ENCODE measurements at regions of chr1 and their contacts with region 1.

Region 1: GRCh38 chr1:112466078-112466660 is 42.6 kb upstream of the WNT2B start:
- H3K4me3 Mint-ChIP-seq: peak overlapping the region; percentile 45
- H3K27ac Mint-ChIP-seq: peak overlapping the region; percentile 89
- H3K4me1 Mint-ChIP-seq: peaks cover 60% of the 10 kb centered on the region
- H3K27me3 Mint-ChIP-seq: no peaks in the 10 kb centered on the region

Region 2: GRCh38 chr1:112390775-112391602 is 75.2 kb before region 1 on chr1:
- intact Hi-C with region 1: loop called (anchors 1 kb)
- H3K4me3 Mint-ChIP-seq: peak overlapping the region; percentile 84
- H3K27ac Mint-ChIP-seq: peak overlapping the region; percentile 82
- H3K4me1 Mint-ChIP-seq: peaks cover 65% of the 10 kb centered on the region
- H3K27me3 Mint-ChIP-seq: peaks cover 20% of the 10 kb centered on the region

Region 3: GRCh38 chr1:112395821-112396652 is 70.1 kb before region 1 on chr1 and contains the start of gene CTTNBP2NL:
- intact Hi-C with region 1: loop called (anchors 1 kb)
- H3K4me3 Mint-ChIP-seq: peak within 1 kb of the TSS; percentile 98
- H3K27ac Mint-ChIP-seq: peak within 1 kb of the TSS; percentile 98
- H3K4me1 Mint-ChIP-seq: peaks cover 76% of the 10 kb centered on the region
- H3K27me3 Mint-ChIP-seq: no peaks in the 10 kb centered on the region

Region 4: DNA sequence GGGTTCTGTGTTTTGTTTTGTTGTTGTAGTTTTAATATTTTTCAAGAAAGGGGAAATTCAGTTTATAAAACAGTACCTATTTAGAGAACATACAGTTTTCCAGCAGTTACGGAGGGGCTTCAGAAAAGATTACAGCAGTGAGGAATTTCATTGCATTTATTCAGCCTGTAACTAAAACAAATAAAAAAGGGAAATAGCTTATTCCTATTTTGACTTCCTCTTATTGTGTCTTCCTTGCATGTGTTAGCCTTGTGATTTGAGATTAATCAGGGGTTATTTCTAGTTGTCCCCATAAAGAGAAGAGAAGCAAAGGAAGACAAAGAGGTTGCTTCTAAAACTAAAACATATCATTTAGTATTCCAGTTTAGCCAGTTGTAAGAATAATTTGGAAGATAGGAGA is 35.1 kb before region 1 on chr1:
- intact Hi-C with region 1: loop called (anchors 5 kb)
- H3K4me3 Mint-ChIP-seq: peak overlapping the region; percentile 49
- H3K27ac Mint-ChIP-seq: peak overlapping the region; percentile 95
- H3K4me1 Mint-ChIP-seq: peaks cover 36% of the 10 kb centered on the region
- H3K27me3 Mint-ChIP-seq: no peaks in the 10 kb centered on the region

Region 5: GRCh38 chr1:112619520-112620376 is 153.6 kb after region 1 on chr1 and contains the start of gene CAPZA1:
- intact Hi-C with region 1: loop called (anchors 1 kb)
- H3K4me3 Mint-ChIP-seq: peak within 1 kb of the TSS; percentile 97
- H3K27ac Mint-ChIP-seq: peak within 1 kb of the TSS; percentile 99
- H3K4me1 Mint-ChIP-seq: peaks cover 29% of the 10 kb centered on the region
- H3K27me3 Mint-ChIP-seq: no peaks in the 10 kb centered on the region

Region 6: DNA sequence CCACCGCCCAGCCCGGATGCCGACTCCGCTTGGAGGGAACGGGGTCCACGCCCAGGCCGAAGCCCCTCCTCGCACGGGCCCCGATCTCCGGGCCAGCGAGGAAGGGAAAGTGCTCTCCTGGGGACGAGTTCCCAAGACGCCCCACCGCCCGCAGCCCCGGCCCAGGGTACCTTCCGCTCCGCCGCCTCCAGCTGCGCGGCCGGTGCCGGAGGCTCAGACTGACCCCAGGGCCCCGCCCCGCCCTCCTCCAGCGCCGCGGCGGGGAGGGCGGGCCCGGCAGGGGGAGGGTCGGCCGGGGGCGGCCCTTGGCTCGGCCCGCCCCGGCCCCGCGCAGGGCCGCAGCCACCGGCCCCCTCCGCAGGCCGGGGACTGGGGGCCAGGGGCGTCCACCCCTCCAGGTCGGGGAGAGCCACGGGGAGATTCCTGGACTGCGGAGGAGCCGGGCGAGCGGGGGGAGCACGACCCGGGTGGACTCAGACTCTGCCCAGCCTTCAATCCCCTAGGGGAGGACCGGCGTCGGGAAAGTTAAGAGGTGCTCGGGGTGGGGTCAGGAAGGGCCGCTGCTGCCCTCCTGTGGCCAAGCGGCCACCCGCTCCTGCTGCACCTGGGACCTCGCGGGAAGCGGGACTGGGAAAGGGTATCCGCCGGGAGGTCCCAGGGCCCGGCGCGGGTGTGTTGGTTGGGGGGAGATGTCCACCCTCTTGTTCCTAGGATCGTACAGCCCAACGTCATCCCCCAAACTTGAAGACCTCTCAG is 240.9 kb after region 1 on chr1 and contains the start of gene RHOC:
- intact Hi-C with region 1: loop called (anchors 10 kb)
- H3K4me3 Mint-ChIP-seq: peak within 1 kb of the TSS; percentile 76
- H3K27ac Mint-ChIP-seq: peak within 1 kb of the TSS; percentile 64
- H3K4me1 Mint-ChIP-seq: peaks cover 55% of the 10 kb centered on the region
- H3K27me3 Mint-ChIP-seq: peaks cover 56% of the 10 kb centered on the region

Region 7: DNA sequence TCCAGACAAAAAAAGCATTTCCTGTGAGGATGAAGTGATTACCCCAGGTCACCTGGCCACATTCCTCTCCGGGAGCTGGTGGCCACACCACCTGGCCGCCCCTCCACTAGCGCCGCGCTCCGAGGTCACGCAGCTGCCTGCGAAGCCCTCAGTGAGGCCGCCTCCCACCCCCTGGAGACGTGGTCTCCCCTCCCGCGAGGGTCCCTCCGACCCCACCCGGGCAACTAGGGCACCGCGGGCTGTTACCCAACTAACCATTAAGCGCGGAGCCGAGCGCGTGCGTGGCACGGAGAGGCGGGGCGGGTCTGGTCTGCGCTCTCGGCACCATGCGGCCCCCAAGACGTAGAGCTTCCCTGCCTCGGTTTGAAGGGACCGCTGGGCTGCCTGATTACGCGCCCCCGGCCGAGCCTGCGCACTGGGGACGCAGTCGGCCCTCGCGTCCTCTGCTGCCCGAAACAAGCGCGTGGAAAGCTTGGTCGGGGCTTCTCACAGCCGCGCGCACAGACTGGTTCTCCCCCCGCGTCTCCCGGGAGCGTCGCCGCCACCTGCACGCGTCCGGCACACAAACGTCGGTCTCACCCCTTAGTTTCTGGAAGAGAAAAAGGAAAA is 383.4 kb after region 1 on chr1:
- intact Hi-C with region 1: no loop called
- H3K4me3 Mint-ChIP-seq: peak overlapping the region; percentile 72
- H3K27ac Mint-ChIP-seq: peak overlapping the region; percentile 67
- H3K4me1 Mint-ChIP-seq: peaks cover 22% of the 10 kb centered on the region
- H3K27me3 Mint-ChIP-seq: peaks cover 54% of the 10 kb centered on the region